GM12878 (cell line): ENCODE measurements at regions of chrX and their contacts with region 1.

Region 1: GRCh38 chrX:19747652-19748610 is 139.5 kb downstream of the SH3KBP1 start:
- DNase-seq: no peak
- ATAC-seq: peak; percentile 48
- H3K4me3 ChIP-seq: no peak overlapping the region
- H3K27ac ChIP-seq: peak overlapping the region; percentile 91
- H3K4me1 ChIP-seq: peaks cover 59% of the 10 kb centered on the region
- H3K27me3 ChIP-seq: no peaks in the 10 kb centered on the region
- CTCF ChIP-seq: no peak
- EP300 ChIP-seq: peak in 1 of 2 experiments; percentile 33; a peak in 1 of 4 replicates
- POLR2A ChIP-seq: no peak
- RAD21 ChIP-seq: no peak

Region 2: DNA sequence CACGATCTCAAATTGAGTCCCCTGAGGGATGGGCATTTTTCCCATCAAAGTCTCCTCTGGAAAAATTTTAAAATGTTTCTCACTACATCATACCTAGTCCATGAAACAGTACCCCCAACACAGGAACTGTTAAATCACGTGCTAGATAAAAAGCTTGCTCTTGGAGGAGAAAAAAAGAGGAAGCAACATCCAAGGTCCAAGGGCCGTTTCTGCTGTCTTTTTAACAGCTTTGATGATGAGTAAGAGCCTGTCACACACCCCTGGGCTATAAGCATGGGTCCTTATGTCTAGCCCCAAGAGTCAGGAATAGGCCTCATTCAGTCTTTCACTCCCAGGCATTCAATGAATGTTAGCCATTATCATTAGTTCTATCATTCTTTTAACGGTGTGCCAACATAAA is 10.6 kb after region 1 on chrX:
- CTCF ChIA-PET with region 1: interaction called, 14 read pairs
- POLR2A ChIA-PET with region 1: interaction called, 42 read pairs
- RAD21 ChIA-PET with region 1: interaction called, 65 read pairs
- SMC1A ChIA-PET with region 1: interaction called, 624 read pairs
- in situ Hi-C with region 1: no loop called
- intact Hi-C with region 1: no loop called
- DNase-seq: no peak
- ATAC-seq: peak; percentile 69
- H3K4me3 ChIP-seq: no peak overlapping the region
- H3K27ac ChIP-seq: peak overlapping the region; percentile 13; the same call in 1 of the 2 replicates
- H3K4me1 ChIP-seq: peaks cover 46% of the 10 kb centered on the region
- H3K27me3 ChIP-seq: no peaks in the 10 kb centered on the region
- CTCF ChIP-seq: no peak
- EP300 ChIP-seq: no peak
- POLR2A ChIP-seq: no peak
- RAD21 ChIP-seq: no peak

Region 3: DNA sequence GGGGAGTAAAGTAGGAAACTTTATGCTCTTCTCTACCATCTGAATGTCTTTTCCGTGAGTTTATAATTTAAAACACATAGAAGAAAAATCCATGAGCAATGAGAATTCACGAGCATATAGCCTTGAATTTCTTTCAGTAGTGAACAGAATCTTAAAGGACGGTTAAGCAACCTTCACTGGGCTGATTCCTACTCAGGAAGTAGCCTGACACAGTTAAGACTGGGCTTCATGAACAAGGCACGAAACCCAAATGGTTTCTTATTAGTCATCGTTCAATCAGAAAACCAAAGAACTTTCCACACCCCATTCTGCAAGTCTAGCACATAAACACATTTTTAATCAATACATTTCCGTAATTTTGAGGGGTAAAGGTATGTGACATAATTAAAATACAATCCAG is 43.6 kb after region 1 on chrX:
- CTCF ChIA-PET with region 1: interaction called, 4 read pairs
- POLR2A ChIA-PET with region 1: interaction called, 3 read pairs
- RAD21 ChIA-PET with region 1: interaction called, 9 read pairs
- SMC1A ChIA-PET with region 1: interaction called, 12 read pairs
- in situ Hi-C with region 1: no loop called
- intact Hi-C with region 1: loop called (anchors 5 kb)
- DNase-seq: no peak
- ATAC-seq: peak; percentile 76
- H3K4me3 ChIP-seq: 0 out of 2 replicates have a peak overlapping the region, but pooled peaks have one; percentile 11
- H3K27ac ChIP-seq: peak overlapping the region; percentile 69
- H3K4me1 ChIP-seq: peaks cover 17% of the 10 kb centered on the region
- H3K27me3 ChIP-seq: no peaks in the 10 kb centered on the region
- CTCF ChIP-seq: no peak
- EP300 ChIP-seq: no peak
- POLR2A ChIP-seq: no peak
- RAD21 ChIP-seq: no peak

Region 4: DNA sequence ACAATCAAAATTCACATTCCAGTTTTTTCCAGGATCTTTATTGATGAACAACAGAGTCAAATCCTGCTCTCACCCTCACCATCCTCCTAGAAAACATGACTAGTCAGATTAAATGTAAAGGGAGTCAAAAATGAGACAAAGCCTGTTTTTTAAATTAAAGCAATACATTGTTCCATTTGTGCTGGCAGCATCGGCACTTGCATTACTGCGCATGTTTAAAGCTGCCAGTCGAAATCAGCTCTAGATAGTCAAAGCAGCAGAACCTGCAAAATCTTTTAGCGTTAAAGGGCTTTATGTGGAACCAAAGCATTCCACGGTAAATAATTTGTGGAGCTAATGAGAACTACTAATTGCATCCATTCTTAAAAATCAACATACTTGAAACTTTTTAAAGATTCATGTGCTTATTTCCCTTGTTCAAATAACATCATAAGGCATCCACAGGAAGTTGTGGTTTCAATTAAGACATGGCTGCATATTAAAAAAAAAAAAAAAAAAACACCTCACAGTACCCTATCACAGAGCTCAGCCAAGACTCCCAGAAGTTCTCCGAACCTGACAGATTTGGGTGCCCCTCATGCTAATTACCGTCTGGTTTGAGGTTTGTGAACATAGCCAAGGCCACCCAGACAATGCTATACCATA is 57.2 kb after region 1 on chrX:
- CTCF ChIA-PET with region 1: interaction called, 3 read pairs
- POLR2A ChIA-PET with region 1: no interaction called
- RAD21 ChIA-PET with region 1: interaction called, 10 read pairs
- SMC1A ChIA-PET with region 1: interaction called, 13 read pairs
- in situ Hi-C with region 1: no loop called
- intact Hi-C with region 1: no loop called
- DNase-seq: no peak
- ATAC-seq: no peak; the same call in 2 of the 3 replicates
- H3K4me3 ChIP-seq: peak overlapping the region; percentile 12; the same call in 1 of the 2 replicates
- H3K27ac ChIP-seq: peak overlapping the region; percentile 48
- H3K4me1 ChIP-seq: peaks cover 32% of the 10 kb centered on the region
- H3K27me3 ChIP-seq: no peaks in the 10 kb centered on the region
- CTCF ChIP-seq: no peak
- EP300 ChIP-seq: no peak
- POLR2A ChIP-seq: no peak
- RAD21 ChIP-seq: no peak

Region 5: GRCh38 chrX:19846995-19847790 is 99.3 kb after region 1 on chrX:
- CTCF ChIA-PET with region 1: interaction called, 3 read pairs
- POLR2A ChIA-PET with region 1: interaction called, 25 read pairs
- RAD21 ChIA-PET with region 1: interaction called, 17 read pairs
- SMC1A ChIA-PET with region 1: interaction called, 7 read pairs
- in situ Hi-C with region 1: no loop called
- intact Hi-C with region 1: loop called (anchors 5 kb)
- DNase-seq: no peak
- ATAC-seq: peak; percentile 55
- H3K4me3 ChIP-seq: 0 out of 2 replicates have a peak overlapping the region, but pooled peaks have one; percentile 8
- H3K27ac ChIP-seq: peak overlapping the region; percentile 79
- H3K4me1 ChIP-seq: peaks cover 38% of the 10 kb centered on the region
- H3K27me3 ChIP-seq: no peaks in the 10 kb centered on the region
- CTCF ChIP-seq: no peak
- EP300 ChIP-seq: no peak
- POLR2A ChIP-seq: no peak
- RAD21 ChIP-seq: no peak

Region 6: DNA sequence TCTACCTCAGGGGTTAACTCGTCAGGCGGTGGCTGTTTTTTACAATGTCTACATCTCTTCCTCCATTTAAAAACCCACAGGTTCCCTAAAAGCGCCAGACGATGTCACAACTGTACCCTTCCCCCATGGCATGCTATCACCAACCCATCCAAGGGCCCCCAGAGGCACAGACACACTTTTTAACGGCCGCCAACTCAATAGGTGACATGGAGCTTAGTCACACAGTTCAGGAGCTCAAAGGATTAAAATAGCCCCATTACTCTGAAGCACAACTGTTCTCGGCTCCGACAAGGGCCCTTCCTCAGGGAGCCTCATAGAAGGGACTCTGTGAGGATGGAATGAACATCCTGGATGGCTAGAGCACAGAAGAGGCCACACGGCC is 127.1 kb after region 1 on chrX:
- CTCF ChIA-PET with region 1: interaction called, 4 read pairs
- POLR2A ChIA-PET with region 1: interaction called, 9 read pairs
- RAD21 ChIA-PET with region 1: interaction called, 6 read pairs
- SMC1A ChIA-PET with region 1: interaction called, 21 read pairs
- in situ Hi-C with region 1: no loop called
- intact Hi-C with region 1: no loop called
- DNase-seq: no peak
- ATAC-seq: peak; percentile 36
- H3K4me3 ChIP-seq: peak overlapping the region; percentile 46; the same call in 1 of the 2 replicates
- H3K27ac ChIP-seq: peak overlapping the region; percentile 68
- H3K4me1 ChIP-seq: peaks cover 24% of the 10 kb centered on the region
- H3K27me3 ChIP-seq: no peaks in the 10 kb centered on the region
- CTCF ChIP-seq: no peak
- EP300 ChIP-seq: no peak
- POLR2A ChIP-seq: no peak
- RAD21 ChIP-seq: no peak